ENCODE measurements at regions of chr20 and their contacts with region 1.

Region 1: DNA sequence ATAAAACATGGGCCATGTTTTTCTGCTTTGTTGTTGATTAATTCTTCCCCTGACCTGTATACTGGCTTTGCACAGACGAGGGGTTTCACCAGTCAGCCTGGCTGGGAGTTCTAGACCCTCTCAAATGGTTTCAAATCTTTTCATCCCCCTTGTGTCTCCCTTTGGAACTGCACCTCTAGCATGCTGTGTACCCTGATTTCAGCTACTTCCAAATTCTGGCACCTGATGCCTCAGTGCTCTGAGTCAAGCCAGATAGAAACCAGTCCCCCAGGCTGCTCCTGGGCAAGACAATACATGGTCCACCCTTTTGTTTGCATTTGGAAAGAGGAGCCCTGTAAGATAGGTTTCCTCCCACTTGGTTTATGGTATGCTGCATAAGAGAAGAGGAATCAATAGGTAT is 290.2 kb downstream of the BTBD3 start:
- DNase-seq: peak; percentile 49
- H3K4me3 ChIP-seq: no peak overlapping the region
- H3K27ac ChIP-seq: no peak overlapping the region
- H3K4me1 ChIP-seq: no peaks in the 10 kb centered on the region
- H3K27me3 ChIP-seq: no peaks in the 10 kb centered on the region
- CTCF ChIP-seq: peak; percentile 62 to 63
- POLR2A ChIP-seq: no peak

Region 2: GRCh38 chr20:11676630-11677284 is 531.1 kb before region 1 on chr20:
- CTCF ChIA-PET with region 1: interaction called, 9 read pairs
- POLR2A ChIA-PET with region 1: no interaction called
- dilution Hi-C with region 1: no loop called
- intact Hi-C with region 1: loop called (anchors 1 kb)
- DNase-seq: peak; percentile 51
- H3K4me3 ChIP-seq: no peak overlapping the region
- H3K27ac ChIP-seq: no peak overlapping the region
- H3K4me1 ChIP-seq: no peaks in the 10 kb centered on the region
- H3K27me3 ChIP-seq: peaks cover 0 to 5% of the 10 kb centered on the region in 2 experiments
- CTCF ChIP-seq: peak; percentile 70 to 75
- POLR2A ChIP-seq: no peak

Region 3: DNA sequence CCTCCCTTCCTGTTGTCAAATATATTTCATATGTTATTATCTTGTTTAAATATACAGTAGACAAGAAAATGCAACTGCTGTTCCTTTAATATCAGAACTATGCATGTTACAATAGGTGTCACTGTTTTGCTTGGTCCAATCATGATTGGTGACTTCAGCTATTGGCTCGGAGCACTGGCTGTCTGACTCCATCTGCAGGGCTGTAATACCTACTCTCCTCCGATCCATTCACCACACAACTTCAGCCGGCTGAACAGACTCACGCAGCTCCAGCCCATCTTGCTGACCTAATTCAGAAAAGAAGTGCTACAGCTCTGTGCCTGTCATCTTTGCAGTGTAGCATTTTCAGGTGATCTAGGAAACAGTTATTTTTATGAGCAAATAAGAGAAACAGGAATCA is 290.2 kb before region 1 on chr20 and contains the start of gene BTBD3:
- CTCF ChIA-PET with region 1: no interaction called
- POLR2A ChIA-PET with region 1: no interaction called
- dilution Hi-C with region 1: no loop called
- intact Hi-C with region 1: loop called (anchors 10 kb)
- DNase-seq: peak; percentile 86
- H3K4me3 ChIP-seq: peak within 1 kb of the TSS in 1 of 3 experiments; percentile 31
- H3K27ac ChIP-seq: no peak within 1 kb of the TSS
- H3K4me1 ChIP-seq: peaks cover 3% of the 10 kb centered on the region
- H3K27me3 ChIP-seq: no peaks in the 10 kb centered on the region
- CTCF ChIP-seq: peak in 1 of 2 donors; percentile 3
- POLR2A ChIP-seq: peak; percentile 17
- total RNA-seq, gene BTBD3: 29.3 and 30.1 TPM in 2 replicates

Region 4: DNA sequence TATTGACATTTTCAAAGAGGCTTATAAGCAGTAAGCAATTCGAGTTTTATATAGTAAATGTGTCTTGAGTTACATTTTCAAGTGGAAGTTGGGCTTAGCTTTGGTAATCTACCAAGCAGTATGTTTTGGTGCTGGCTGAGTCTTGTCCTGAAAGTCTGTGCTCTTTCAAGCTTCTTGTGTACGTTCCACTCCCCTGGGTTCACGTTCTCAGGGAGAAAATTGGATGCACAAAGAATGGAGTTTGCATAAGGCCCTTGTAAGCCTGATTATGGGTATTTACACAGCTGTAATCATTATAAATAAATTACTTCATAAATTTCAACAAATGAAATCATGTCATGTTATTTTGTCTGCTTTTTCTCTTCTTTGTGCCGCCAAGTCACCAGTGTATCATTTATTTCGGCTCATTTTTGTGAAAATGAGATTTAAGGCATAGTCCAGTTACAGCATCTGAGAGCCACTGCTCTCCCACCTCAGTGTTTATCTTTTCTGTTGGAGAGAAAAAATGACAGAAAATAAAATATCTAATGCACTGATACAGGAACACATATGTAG is 27.7 kb before region 1 on chr20:
- CTCF ChIA-PET with region 1: interaction called, 3 read pairs
- POLR2A ChIA-PET with region 1: no interaction called
- dilution Hi-C with region 1: no loop called
- intact Hi-C with region 1: loop called (anchors 2 kb)
- DNase-seq: no peak
- H3K4me3 ChIP-seq: no peak overlapping the region
- H3K27ac ChIP-seq: no peak overlapping the region
- H3K4me1 ChIP-seq: no peaks in the 10 kb centered on the region
- H3K27me3 ChIP-seq: no peaks in the 10 kb centered on the region
- CTCF ChIP-seq: no peak
- POLR2A ChIP-seq: no peak